ENCODE measurements at regions of chr12 and their contacts with region 1.

Region 1: DNA sequence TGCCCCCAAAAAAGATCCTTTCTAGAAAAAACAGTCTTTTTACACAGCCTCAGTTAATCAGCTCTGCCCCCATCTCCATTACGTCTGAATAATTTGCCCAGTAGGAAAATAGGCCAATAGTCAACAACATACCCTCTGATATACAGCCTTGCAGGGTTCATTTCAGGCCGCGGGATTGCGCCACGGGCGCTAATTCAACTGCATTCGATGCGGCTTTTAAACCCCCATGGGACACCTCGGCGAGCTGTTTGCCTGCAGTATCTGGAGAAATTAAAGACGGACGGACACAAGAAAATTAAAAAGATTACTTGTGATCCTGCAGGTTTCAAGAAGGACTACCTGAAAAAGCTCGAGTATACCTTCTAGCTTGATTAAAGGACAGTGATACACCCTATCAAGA is 36.1 kb downstream of the ERP29 start:
- DNase-seq: no peak
- H3K4me3 ChIP-seq: no peak overlapping the region
- H3K27ac ChIP-seq: no peak overlapping the region
- H3K4me1 ChIP-seq: no peaks in the 10 kb centered on the region
- H3K27me3 ChIP-seq: no peaks in the 10 kb centered on the region
- CTCF ChIP-seq: no peak

Region 2: DNA sequence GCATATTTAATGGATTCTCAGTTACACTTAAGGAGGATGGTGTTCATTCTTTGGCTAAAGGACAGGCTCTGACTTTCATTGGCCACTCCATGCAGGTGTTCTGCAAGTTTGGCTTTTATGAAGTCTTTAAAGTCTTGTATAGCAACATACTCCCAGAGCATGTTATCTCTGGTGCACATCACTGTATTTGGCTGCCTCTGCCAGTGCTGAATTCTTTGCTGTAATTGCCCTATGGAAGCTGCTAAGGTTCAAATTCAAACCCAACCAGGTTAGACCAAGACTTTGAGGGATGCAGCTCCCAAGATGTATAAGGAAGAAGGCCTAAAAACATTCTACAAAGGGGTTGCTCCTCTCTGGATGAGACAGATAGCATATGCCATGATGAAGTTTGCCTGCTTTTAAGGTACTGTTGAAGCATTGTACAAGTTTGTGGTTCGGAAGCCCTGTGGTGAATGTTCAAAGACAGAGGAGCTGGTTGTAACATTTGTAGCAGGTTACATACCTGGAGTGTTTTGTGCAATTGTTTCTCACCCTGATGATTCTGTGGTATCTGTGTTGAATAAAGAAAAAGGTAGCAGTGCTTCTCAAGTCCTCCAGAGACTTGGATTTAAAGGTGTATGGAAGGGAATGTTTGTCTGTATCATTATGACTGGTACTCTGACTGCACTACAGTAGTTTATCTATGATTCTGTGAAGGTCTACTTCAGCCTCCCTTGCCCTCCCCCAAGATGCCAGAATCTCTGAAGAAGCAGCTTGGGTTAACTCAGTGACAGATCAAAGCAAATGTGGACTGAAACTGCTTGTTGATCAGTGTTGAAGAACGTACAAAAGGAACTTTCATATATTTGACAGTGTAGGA is 55.8 kb before region 1 on chr12:
- intact Hi-C with region 1: loop called (anchors 2 kb)
- DNase-seq: no peak
- H3K4me3 ChIP-seq: no peak overlapping the region
- H3K27ac ChIP-seq: no peak overlapping the region
- H3K4me1 ChIP-seq: peaks cover 0 to 13% (median 2%) of the 10 kb centered on the region in 4 donors
- H3K27me3 ChIP-seq: no peaks in the 10 kb centered on the region
- CTCF ChIP-seq: no peak

Region 3: DNA sequence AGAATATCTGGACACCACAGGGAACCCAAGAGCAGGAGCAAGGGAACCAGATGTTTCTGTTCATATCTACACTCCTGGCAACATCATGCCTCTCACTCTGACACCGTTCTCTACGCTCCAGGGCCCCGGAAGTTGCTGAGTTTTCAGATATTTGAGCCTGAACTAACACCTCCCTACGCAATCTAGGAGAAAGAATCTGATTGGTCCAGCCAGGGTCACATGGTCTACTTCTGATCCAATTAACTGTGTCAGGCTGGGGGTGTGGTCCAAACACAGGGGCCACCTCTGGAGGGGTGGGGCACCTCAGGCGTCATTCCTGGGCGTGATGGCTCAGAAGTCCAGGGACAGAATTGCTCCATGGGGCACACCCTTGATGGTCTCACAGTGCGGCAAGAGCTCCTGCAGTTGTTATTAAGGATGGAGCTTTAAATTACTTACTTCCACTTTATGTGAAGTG is 534.9 kb after region 1 on chr12:
- intact Hi-C with region 1: no loop called
- DNase-seq: no peak
- H3K4me3 ChIP-seq: no peak overlapping the region
- H3K27ac ChIP-seq: no peak overlapping the region
- H3K4me1 ChIP-seq: no peaks in the 10 kb centered on the region
- H3K27me3 ChIP-seq: no peaks in the 10 kb centered on the region
- CTCF ChIP-seq: no peak

Region 4: DNA sequence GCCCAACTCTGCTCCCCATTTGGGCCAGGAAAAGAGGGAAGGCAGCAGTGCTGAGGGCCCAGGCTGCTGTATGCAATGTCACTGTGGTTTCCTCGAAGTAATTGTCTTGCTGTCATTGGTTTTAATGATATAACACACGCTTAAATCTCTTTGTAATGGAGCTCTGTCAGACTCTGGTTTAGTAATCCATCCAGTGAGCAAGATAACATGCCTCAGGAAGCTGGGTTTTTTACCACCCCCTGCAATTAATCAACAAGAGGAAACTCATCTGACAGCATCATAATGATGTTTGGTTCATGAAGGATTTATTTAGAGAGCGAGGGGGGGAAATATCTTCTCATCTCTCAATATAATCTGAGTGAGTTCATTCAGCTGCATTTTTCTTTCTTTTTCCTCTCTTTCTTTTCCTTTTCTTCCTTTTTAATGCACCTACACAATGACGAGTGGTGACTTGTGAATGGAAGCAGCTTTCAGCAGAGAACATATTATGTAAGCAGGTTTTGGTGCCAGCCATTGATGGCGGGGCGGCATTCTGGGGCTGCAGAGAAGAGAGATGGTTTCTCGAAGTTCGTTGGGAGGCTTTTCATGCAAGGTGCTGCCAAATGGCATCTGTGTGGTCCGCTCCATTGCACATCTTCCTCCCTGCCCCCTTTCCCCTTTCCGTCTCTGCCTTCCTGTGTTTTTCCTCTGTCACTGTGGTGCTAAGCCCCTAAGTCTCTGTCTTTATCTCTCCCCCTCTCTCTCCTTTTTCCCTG is 748.8 kb after region 1 on chr12:
- intact Hi-C with region 1: no loop called
- DNase-seq: no peak
- H3K4me3 ChIP-seq: no peak overlapping the region
- H3K27ac ChIP-seq: no peak overlapping the region
- H3K4me1 ChIP-seq: no peaks in the 10 kb centered on the region
- H3K27me3 ChIP-seq: peaks cover 0 to 22% of the 10 kb centered on the region in 2 donors
- CTCF ChIP-seq: no peak

Measured in tibial artery (tissue), 4 donors.